PC-9 (cell line): ENCODE measurements at regions of chr19 and their contacts with region 1.

Region 1: DNA sequence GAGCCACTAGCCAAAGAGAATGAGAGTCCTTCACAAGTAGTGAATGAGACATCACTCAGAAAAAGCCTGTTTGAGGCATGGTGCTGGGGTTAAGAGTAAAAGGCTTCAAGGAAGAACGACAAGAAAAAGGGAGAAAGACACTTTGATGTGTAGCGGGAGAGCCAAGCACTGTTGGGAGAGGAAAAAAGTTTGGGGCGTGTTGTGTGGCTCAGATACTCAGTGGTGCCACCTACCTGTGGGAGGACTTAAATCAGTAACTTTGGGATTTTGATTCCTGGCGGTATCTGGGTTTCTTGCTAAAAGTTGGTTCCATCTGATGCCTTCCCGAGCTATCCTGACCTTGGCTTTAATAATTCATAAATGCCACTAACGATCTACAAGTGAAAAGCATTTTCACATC is 12.3 kb downstream of the ELSPBP1 start:
- DNase-seq: no peak
- H3K4me3 ChIP-seq: no peak overlapping the region
- H3K27ac ChIP-seq: no peak overlapping the region
- H3K4me1 ChIP-seq: no peaks in the 10 kb centered on the region
- H3K27me3 ChIP-seq: peaks cover 40% of the 10 kb centered on the region
- CTCF ChIP-seq: peak; percentile 43; the same call in 1 of the 2 replicates

Region 2: DNA sequence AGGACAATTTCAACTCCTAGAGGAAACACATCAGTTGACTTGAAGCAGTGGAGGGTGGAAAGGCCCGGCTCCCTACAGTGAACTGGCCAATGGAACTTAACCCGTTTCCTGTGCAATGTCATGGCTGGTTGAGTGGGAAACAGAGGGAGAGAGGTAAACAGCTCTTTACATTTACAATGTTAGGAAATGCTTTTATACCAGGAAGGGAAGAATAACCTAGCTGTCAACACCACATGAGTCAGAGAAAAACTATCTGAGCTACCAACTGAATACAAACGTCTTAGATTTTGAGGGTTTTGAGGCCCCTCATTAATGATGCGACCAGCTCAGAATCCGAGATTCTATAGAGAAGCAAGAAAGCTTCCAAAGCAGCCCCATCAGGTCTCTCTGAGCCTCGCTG is 212.2 kb after region 1 on chr19:
- CTCF ChIA-PET with region 1: no interaction called
- POLR2A ChIA-PET with region 1: interaction called, 16 read pairs
- intact Hi-C with region 1: no loop called
- DNase-seq: peak in 1 of 2 experiments; percentile 36
- H3K4me3 ChIP-seq: no peak overlapping the region
- H3K27ac ChIP-seq: no peak overlapping the region
- H3K4me1 ChIP-seq: peaks cover 7% of the 10 kb centered on the region; the same call in 1 of the 2 replicates
- H3K27me3 ChIP-seq: no peaks in the 10 kb centered on the region
- CTCF ChIP-seq: no peak

Region 3: GRCh38 chr19:48255376-48256303 is 248.9 kb after region 1 on chr19 and contains the start of gene CARD8:
- CTCF ChIA-PET with region 1: interaction called, 12 read pairs
- POLR2A ChIA-PET with region 1: no interaction called
- intact Hi-C with region 1: no loop called
- DNase-seq: peak; percentile 72 to 82
- H3K4me3 ChIP-seq: peak within 1 kb of the TSS; percentile 65
- H3K27ac ChIP-seq: peak within 1 kb of the TSS; percentile 93
- H3K4me1 ChIP-seq: peaks cover 32% of the 10 kb centered on the region
- H3K27me3 ChIP-seq: no peaks in the 10 kb centered on the region
- CTCF ChIP-seq: no peak
- total RNA-seq, gene CARD8: 17.7 and 25.6 TPM in 2 replicates